ENCODE measurements at regions of chr7 and their contacts with region 1.

Region 1: DNA sequence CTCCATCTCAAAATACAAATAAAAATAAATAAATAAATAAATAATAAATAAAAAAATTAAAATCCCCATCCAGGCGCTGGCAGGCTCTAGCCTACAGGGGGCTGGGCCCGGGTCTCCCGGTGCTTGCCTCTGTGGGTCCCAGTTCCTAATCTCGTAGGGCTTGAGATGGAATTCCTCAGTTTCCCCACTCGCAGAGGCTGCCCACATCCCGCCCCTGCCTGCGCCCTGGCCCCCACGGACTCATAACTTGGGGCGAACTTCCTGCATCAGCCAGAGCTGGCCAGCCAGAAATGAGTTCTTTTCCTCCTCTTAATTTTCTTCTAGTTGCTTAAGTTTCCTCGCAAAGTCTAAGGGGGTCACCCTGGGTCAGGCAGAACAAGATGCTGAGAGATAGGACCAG is 22.0 kb upstream of the SRRM3 start:
- DNase-seq: no peak
- H3K4me3 Mint-ChIP-seq: no peak overlapping the region
- H3K27ac Mint-ChIP-seq: no peak overlapping the region
- H3K4me1 Mint-ChIP-seq: peaks cover 4% of the 10 kb centered on the region
- H3K27me3 Mint-ChIP-seq: no peaks in the 10 kb centered on the region

Region 2: DNA sequence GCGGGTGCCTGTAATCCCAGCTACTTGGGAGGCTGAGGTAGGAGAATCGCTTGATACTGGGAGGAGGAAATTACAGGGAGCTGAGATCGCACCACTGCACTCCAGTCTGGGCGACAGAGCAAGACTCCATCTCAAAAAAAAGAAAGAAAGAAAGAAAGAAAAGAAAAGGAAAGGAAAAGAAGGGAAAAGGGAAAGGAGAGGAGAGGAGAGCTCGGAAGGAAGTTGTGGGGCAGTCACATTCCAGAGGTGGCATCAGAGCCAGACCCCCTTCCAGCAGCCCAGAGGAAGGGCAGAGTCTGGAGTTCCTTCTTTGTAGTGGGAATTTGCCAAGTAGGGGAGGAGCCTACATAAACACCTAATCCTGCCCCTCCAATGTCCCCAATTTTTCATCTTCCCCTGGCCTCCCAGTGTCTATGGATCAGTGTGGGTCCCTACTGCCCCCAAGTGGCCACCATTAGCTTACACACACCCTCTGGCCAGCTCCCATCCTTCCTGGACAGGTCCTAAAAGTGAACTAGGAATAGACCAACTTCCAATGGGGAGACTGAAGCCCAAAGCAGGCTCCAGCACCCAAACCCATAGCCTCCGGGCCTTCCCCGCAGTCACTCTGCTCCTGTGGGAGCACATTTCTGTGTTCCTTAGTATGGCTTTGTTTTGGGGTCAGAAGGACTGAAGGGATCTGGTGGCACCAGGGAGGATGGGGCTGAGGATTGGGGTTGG is 83.2 kb after region 1 on chr7:
- intact Hi-C with region 1: loop called (anchors 1 kb)
- DNase-seq: no peak
- H3K4me3 Mint-ChIP-seq: no peak overlapping the region
- H3K27ac Mint-ChIP-seq: no peak overlapping the region
- H3K4me1 Mint-ChIP-seq: peaks cover under 1% of the 10 kb centered on the region
- H3K27me3 Mint-ChIP-seq: peaks cover 20% of the 10 kb centered on the region

Region 3: DNA sequence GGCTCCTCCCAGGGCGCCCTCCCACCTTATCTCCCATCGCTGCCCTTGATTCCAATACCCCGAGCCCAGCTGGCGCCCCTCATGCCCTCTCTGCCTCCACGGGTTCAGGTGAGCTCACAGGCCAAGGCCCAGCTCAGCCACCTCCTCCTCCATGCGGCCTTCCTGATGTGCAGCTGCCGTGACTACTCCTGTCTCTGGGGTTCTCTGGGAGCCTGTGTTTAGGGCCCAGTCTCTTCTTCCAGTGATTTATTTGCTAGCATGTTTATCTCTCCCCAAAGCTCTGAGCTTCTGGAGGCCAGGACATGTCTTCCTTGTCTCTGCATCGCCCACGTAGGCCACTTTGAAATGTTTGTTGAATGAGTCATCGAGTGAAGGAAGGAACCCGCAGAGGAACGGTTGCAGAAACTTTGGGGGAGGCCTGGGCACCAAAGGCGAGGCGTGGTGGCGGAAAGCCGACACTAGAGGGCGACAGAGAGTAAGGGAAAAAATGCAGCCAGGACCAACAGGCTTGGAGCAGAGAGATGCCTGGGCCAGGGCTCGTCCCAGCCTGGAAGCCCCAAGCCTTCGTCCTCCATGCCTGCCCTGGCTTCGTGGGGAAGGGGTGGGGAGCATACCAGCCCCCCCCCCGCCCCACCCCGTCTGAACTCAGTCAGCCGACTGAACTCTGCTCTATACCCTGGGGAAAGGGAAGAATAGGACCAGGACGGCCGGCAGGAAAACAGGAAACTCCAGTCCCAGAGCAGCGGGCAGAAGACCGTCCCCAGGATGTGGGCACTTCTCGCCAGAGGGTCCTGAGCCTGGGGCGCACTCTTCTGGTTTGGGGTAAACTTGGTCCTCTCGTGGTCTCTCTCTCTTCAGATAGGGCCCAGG is 111.9 kb after region 1 on chr7:
- intact Hi-C with region 1: loop called (anchors 5 kb)
- DNase-seq: peak; percentile 84
- H3K4me3 Mint-ChIP-seq: peak overlapping the region; percentile 3
- H3K27ac Mint-ChIP-seq: peak overlapping the region; percentile 78
- H3K4me1 Mint-ChIP-seq: peaks cover 13% of the 10 kb centered on the region
- H3K27me3 Mint-ChIP-seq: no peaks in the 10 kb centered on the region